GM23248 (cell line): ENCODE measurements at regions of chr1 and their contacts with region 1.

Region 1: GRCh38 chr1:39081266-39082009 is 55.3 kb downstream of the NDUFS5 start:
- DNase-seq: peak; percentile 55
- H3K4me3 ChIP-seq: peak overlapping the region; percentile 68
- H3K27ac ChIP-seq: no peak overlapping the region
- H3K4me1 ChIP-seq: peaks cover 7% of the 10 kb centered on the region
- H3K27me3 ChIP-seq: no peaks in the 10 kb centered on the region

Region 2: DNA sequence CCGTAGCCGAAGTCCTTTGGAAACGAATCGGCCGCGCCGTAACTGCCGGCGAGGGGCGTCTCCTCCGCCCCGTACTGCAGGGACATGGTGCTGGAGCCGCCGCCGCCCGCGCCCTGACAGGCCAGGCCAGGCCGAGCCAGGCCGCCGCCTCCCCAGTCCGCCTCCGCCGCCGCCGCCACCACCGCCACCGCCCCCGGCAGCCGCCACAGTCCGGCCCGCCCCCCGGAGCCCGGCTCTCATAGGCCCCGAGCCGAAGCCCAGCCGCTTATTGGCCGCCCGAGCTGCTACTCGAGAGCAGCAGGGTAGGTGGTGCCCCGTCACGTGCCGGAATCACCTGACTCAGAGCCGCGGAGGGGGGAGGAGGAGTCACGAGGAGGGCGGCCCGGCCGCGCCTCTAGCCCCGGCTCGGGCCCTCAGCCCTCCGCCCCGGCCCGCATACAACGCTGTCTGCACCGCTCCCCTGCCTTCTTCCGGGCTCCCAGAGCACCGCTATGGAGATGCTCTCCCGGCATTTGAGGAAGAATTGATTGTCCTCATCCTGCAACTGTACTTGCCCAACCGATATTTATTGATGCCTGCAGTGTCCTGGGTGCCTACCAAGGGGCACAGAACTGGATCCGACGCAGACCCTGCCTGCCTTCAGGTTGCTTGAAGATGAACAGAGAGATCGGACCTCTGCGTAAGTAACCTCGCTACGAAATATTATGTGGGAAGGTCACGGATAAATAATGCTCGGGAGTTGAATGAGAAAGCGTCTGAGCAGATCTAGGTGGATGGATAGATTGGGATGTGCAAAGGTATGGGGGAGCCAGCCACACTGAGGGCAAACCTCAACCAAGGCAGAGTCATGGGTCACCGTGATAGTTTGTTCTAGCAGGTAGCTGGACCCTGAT is 221.6 kb before region 1 on chr1 and contains the start of gene RRAGC:
- in situ Hi-C with region 1: loop called (anchors 10 kb)
- DNase-seq: peak; percentile 100
- H3K4me3 ChIP-seq: peak within 1 kb of the TSS; percentile 98
- H3K27ac ChIP-seq: peak within 1 kb of the TSS; percentile 83
- H3K4me1 ChIP-seq: peaks cover 12% of the 10 kb centered on the region; the same call in 1 of the 2 replicates
- H3K27me3 ChIP-seq: no peaks in the 10 kb centered on the region
- total RNA-seq, gene RRAGC: 17.9 and 23.5 TPM in 2 replicates

Region 3: DNA sequence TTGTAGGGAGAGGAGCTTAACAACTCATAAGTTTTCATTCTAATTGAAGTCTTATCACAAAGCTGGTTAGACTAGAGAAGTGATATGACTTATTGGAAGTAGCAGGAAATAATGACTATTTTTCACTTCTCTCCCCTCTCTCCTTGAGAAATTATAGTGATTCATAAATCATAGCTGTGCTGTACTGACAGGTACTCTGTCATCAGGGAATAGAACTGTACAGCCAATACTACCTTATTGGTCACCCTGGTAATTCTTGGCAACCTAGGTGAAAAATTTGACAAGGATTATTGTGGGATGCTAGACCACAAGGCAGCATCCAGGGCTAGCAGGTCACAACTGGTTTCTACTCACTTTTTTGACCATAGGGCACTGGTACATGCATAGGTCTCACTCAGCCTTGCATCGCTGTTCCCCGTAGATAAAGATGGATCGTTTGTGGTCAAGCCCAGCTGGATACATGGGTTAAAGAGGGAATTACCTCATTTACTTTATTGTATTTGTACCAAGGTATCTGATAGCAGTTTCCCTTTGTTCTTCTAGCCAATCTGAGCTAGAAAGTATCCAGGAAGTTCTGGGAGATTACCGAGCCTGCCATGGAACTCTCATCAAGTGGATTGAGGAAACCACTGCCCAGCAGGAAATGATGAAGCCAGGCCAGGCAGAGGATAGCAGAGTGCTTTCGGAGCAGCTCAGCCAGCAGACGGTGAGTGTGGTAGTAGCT is 236.6 kb after region 1 on chr1:
- in situ Hi-C with region 1: no loop called
- DNase-seq: no peak
- H3K4me3 ChIP-seq: no peak overlapping the region
- H3K27ac ChIP-seq: no peak overlapping the region
- H3K4me1 ChIP-seq: no peaks in the 10 kb centered on the region
- H3K27me3 ChIP-seq: no peaks in the 10 kb centered on the region